ENCODE measurements at regions of chr6 and their contacts with region 1.

Region 1: DNA sequence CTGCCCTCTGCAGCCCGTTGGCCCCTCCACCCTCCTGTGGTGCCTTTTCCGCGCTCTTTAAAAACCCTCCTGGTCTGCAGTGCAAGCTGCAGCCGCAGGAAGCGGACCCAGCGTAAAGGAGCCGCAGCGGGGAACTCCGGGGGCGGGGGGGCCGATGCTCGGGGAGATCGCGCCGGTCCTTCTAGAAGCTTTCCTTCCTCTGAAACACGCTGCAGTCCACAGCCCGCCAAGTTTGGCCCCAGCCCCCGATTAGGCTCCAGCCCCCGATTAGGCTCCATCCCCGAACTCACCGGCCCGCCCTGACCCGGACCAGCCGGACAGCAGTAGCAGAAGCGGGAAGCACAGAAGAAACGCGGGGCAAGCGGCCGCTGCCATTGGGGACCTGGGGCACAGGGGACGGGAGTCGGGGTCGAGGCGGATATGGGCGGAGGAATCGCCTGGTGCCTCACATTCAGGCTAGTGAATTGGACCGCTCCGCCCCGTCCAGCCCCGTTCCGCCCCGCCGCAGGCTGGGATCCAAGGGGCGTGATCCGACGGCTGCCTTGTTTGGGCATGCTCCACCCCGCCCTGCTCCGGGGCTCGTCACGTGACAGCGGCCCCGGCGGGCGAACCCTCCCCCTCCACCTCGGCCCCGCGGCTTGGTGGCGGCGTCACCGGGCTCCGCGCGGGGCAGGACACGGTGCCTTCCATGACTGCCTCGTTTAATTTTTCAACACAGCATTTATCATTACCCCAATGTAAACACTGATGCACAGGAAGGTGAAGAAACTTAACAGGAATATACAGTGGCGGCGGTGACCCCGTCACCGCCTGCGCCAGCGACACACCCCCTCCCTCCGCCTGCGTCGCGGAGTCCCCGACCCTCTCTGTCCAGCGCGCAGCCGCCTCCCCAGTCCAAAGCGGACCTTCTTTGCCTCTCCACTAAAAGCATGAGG is 20.3 kb downstream of the RAET1L start:
- DNase-seq: peak; percentile 92
- H3K4me3 Mint-ChIP-seq: peak overlapping the region; percentile 82
- H3K27ac Mint-ChIP-seq: peak overlapping the region; percentile 87
- H3K4me1 Mint-ChIP-seq: peaks cover 62% of the 10 kb centered on the region
- H3K27me3 Mint-ChIP-seq: peaks cover 22% of the 10 kb centered on the region

Region 2: GRCh38 chr6:149746147-149746946 is 258.7 kb before region 1 on chr6 and contains the start of gene NUP43:
- intact Hi-C with region 1: loop called (anchors 5 kb)
- DNase-seq: peak; percentile 90
- H3K4me3 Mint-ChIP-seq: peak within 1 kb of the TSS; percentile 99
- H3K27ac Mint-ChIP-seq: peak within 1 kb of the TSS; percentile 87
- H3K4me1 Mint-ChIP-seq: peaks cover 31% of the 10 kb centered on the region
- H3K27me3 Mint-ChIP-seq: no peaks in the 10 kb centered on the region
- total RNA-seq, gene NUP43: 81.3 and 90.5 TPM in 2 replicates

Region 3: GRCh38 chr6:149910721-149911151 is 94.3 kb before region 1 on chr6:
- intact Hi-C with region 1: no loop called
- DNase-seq: no peak
- H3K4me3 Mint-ChIP-seq: no peak overlapping the region
- H3K27ac Mint-ChIP-seq: no peak overlapping the region
- H3K4me1 Mint-ChIP-seq: no peaks in the 10 kb centered on the region
- H3K27me3 Mint-ChIP-seq: peaks cover 25% of the 10 kb centered on the region

Region 4: GRCh38 chr6:149941583-149942431 is 63.2 kb before region 1 on chr6 and contains the start of gene ULBP2:
- intact Hi-C with region 1: loop called (anchors 1 kb)
- DNase-seq: peak; percentile 81
- H3K4me3 Mint-ChIP-seq: peak within 1 kb of the TSS; percentile 90
- H3K27ac Mint-ChIP-seq: peak within 1 kb of the TSS; percentile 84
- H3K4me1 Mint-ChIP-seq: peaks cover 42% of the 10 kb centered on the region
- H3K27me3 Mint-ChIP-seq: peaks cover 76% of the 10 kb centered on the region
- total RNA-seq, gene ULBP2: 0.32 and 0.65 TPM in 2 replicates

Region 5: GRCh38 chr6:149963462-149964307 is 41.4 kb before region 1 on chr6 and contains the start of gene ULBP1:
- intact Hi-C with region 1: loop called (anchors 1 kb)
- DNase-seq: peak; percentile 80
- H3K4me3 Mint-ChIP-seq: peak within 1 kb of the TSS; percentile 91
- H3K27ac Mint-ChIP-seq: peak within 1 kb of the TSS; percentile 90
- H3K4me1 Mint-ChIP-seq: peaks cover 33% of the 10 kb centered on the region
- H3K27me3 Mint-ChIP-seq: peaks cover 75% of the 10 kb centered on the region
- total RNA-seq, gene ULBP1: 0.91 and 0.99 TPM in 2 replicates

Region 6: GRCh38 chr6:150068720-150069648 is 63.9 kb after region 1 on chr6 and contains the start of gene ULBP3:
- intact Hi-C with region 1: loop called (anchors 5 kb)
- DNase-seq: peak; percentile 55
- H3K4me3 Mint-ChIP-seq: peak within 1 kb of the TSS; percentile 83
- H3K27ac Mint-ChIP-seq: no peak within 1 kb of the TSS
- H3K4me1 Mint-ChIP-seq: peaks cover 16% of the 10 kb centered on the region
- H3K27me3 Mint-ChIP-seq: peaks cover 22% of the 10 kb centered on the region
- total RNA-seq, gene ULBP3: 0.56 TPM in 1 of 2 replicates, not detected in the other

Region 7: GRCh38 chr6:150243620-150244314 is 238.7 kb after region 1 on chr6:
- intact Hi-C with region 1: loop called (anchors 10 kb)
- DNase-seq: no peak
- H3K4me3 Mint-ChIP-seq: no peak overlapping the region
- H3K27ac Mint-ChIP-seq: no peak overlapping the region
- H3K4me1 Mint-ChIP-seq: peaks cover 15% of the 10 kb centered on the region
- H3K27me3 Mint-ChIP-seq: peaks cover 8% of the 10 kb centered on the region

Measured in activated T-helper 1 cell treated with anti-CD3 and anti-CD28 coated beads, Interleukin-12 subunit alpha, Interleukin-12 subunit beta, Interleukin-2, Interleukin-4 antibody, amounts not matched to agents 30 ng/mL and 10 ng/mL and 1 ng/mL, durations not matched to agents 14 hours and 24 hours and 36 hours (primary cell).